ENCODE measurements at regions of chr6 and their contacts with region 1.

Region 1: DNA sequence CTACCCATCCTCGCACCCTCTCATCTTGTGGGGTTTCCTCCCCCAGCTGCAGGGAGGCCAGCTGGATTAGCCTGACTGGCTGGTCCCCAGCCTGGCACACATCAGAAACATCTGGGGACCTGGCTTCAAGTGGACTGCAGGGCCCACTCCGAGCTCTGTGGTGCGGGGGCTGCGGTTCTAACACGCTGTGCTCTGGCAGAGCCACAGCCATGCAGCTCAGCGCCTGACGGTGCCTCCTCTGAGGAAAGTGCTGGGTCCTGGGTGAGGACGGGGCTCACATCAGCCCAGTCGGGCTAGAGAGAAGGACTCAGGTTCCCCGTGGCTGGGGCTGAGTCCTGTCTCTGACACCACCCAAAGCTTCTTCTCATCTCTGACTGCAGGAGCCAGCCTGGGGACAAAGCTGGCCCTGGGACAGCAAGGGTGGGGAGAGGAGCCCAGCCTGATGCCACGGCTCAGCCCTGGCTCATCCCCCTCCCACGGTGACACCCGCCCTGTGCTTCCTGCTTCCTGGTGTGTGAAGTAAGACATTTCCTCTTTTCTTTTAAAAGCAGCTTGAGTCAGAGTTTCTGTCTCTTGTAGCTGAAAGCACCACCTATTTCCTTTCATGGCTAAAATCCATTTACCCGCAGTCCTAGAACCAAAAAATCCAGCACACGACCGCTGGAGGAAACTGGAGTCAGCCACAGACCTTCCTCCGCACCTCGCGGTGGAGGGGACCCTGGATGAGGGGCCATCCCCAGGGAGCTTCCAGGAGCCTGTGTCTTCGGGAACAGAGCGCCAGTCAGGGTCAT is 127.4 kb upstream of the AFDN start:
- DNase-seq: peak in 7 of 9 donors; percentile 24 to 66 (median 56)
- ATAC-seq: peak; percentile 89
- H3K4me3 ChIP-seq: peak overlapping the region; percentile 29
- H3K4me3 Mint-ChIP-seq: peak overlapping the region; percentile 66 to 86 (median 82)
- H3K27ac ChIP-seq: no peak overlapping the region
- H3K27ac Mint-ChIP-seq: peak overlapping the region; percentile 48 to 90 (median 74)
- H3K4me1 ChIP-seq: peaks cover 0 to 17% of the 10 kb centered on the region in 2 donors
- H3K4me1 Mint-ChIP-seq: peaks cover 12 to 39% (median 19%) of the 10 kb centered on the region in 7 donors
- H3K27me3 ChIP-seq: peaks cover 0 to 5% of the 10 kb centered on the region in 2 donors
- H3K27me3 Mint-ChIP-seq: peaks cover 8 to 53% (median 11%) of the 10 kb centered on the region in 5 donors

Region 2: DNA sequence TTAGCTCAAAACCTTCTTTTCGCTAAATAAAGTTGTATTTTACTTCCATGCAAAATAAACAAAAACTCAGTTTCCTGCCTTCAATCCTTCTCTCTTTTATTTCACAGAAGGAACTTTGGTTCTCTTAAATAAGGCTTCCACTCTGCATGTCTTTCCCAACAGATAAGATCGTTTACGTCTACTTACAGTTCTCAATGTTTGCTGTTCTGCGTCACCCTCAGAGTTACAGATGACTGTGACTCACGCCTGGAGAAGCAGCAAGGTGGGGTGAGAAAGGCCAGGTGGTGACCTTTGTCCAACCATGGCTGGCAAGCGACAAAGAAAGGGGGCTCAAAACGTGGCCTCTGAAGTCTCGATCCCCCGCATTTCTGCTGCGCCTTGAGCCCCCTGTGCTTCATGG is 1020.9 kb before region 1 on chr6:
- CTCF ChIA-PET with region 1: no interaction called
- POLR2A ChIA-PET with region 1: no interaction called
- intact Hi-C with region 1: no loop called
- DNase-seq: no peak
- ATAC-seq: no peak
- H3K4me3 ChIP-seq: no peak overlapping the region
- H3K4me3 Mint-ChIP-seq: no peak overlapping the region
- H3K27ac ChIP-seq: no peak overlapping the region
- H3K27ac Mint-ChIP-seq: no peak overlapping the region
- H3K4me1 ChIP-seq: no peaks in the 10 kb centered on the region
- H3K4me1 Mint-ChIP-seq: peaks cover 0 to 12% (median 5%) of the 10 kb centered on the region in 7 donors
- H3K27me3 ChIP-seq: no peaks in the 10 kb centered on the region
- H3K27me3 Mint-ChIP-seq: peaks cover 0 to 19% (median 6%) of the 10 kb centered on the region in 5 donors

Region 3: DNA sequence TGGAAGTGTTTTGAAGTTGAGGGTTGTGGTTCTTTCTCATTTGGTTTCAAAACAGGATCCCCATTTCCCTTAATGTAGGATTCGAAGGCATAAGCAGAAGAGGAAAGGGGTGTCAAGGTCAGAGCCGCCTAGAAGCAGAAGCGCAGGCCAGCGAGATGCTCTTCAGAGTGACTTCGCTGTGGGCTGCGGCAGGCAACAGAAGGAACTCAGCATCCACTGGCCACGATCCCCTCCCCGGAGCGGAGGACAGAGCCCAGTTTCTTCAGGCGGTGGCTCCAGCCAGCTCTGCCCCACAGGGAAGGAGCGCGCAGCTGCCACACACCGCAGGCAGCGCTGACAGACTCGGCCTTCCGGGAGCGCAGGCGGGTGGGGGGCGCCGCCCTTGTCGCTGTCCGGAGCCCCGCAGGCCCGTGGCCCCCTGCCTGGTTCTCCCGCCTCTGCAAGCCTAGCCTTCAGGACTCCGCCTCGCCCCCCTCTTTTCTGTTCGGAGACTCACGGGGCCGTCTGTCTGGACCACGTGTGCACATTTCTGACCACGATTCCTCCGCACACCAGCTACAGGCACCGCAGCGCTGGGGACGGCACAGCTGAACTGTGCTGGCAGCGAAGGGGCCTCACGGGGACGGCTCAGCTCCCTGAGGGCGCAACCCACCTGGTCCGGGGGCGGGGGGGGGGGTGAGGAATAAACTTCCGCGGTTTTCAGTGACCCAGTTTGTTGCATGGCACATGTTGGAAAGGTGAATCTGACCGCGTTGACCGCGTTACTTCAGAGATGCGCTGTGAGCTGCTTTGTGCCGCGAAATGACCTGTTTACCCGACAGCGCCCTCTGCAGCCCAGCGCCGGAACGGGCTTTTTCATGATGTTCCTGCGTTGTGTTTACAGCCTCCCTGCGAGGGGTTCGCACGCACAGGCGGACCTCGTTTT is 348.3 kb before region 1 on chr6:
- CTCF ChIA-PET with region 1: no interaction called
- POLR2A ChIA-PET with region 1: no interaction called
- intact Hi-C with region 1: loop called in 1 of 2 experiments (anchors 2 kb)
- DNase-seq: peak; percentile 24 to 85 (median 66)
- ATAC-seq: peak; percentile 89
- H3K4me3 ChIP-seq: peak overlapping the region; percentile 65
- H3K4me3 Mint-ChIP-seq: peak overlapping the region; percentile 83 to 94 (median 91)
- H3K27ac ChIP-seq: no peak overlapping the region
- H3K27ac Mint-ChIP-seq: peak overlapping the region in 6 of 9 donors; percentile 11 to 70 (median 34)
- H3K4me1 ChIP-seq: peaks cover 0 to 4% of the 10 kb centered on the region in 2 donors
- H3K4me1 Mint-ChIP-seq: peaks cover 8 to 24% (median 16%) of the 10 kb centered on the region in 7 donors
- H3K27me3 ChIP-seq: no peaks in the 10 kb centered on the region
- H3K27me3 Mint-ChIP-seq: peaks cover 6 to 44% (median 20%) of the 10 kb centered on the region in 5 donors

Measured in naive thymus-derived CD4-positive, alpha-beta T cell (primary cell).